ENCODE measurements at regions of chr4 and their contacts with region 1.

Region 1: DNA sequence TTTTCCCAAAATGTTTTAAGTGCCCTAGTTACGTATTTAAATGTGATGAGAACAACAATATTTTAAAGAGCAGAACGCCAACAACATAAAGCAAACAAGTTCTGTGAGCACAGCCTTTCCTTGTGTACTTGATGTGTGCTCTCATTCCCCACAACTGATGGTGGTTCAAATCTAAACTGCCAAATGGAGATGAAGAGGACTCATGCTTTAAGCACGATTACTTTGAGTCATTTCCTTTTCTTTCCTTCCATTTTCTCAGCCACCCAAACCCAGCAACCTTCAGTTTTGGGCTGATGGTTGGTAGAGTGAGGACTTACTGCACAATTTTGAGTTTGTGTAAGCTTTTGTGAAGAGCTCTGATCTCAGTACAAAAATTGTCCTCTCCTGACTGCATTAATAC is 1.7 kb downstream of the NSD2 start:
- DNase-seq: peak in 2 of 3 donors; percentile 49 to 61
- H3K4me3 ChIP-seq: peak overlapping the region in 5 of 7 experiments; percentile 6 to 93 (median 84)
- H3K27ac ChIP-seq: peak overlapping the region in 1 of 2 experiments; percentile 87
- H3K4me1 ChIP-seq: peaks cover 14 to 58% (median 39%) of the 10 kb centered on the region in 4 experiments
- H3K27me3 ChIP-seq: no peaks in the 10 kb centered on the region

Region 2: DNA sequence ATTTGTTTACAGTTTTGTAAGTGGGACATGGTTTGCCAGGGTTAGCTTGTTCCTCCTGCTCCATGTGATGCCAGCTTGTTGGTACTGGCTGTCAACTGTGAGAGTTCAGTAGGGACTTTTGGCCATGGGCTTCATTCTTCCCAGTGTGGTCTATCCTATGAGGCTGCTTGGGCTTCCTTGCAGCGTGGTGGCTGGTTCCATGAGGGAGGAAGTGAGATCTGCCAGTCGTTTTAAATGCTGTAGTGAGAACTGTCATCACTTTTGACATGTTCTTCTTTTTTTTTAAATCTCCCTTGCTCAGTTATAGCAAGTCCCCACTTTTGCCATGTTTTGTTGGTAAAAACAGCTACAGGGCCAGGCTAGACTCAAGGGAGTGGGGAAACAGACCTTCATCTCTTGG is 14.2 kb after region 1 on chr4:
- CTCF ChIA-PET with region 1: interaction called, 13 read pairs
- POLR2A ChIA-PET with region 1: no interaction called
- DNase-seq: no peak
- H3K4me3 ChIP-seq: no peak overlapping the region
- H3K27ac ChIP-seq: no peak overlapping the region
- H3K4me1 ChIP-seq: peaks cover 0 to 16% (median under 1%) of the 10 kb centered on the region in 4 experiments
- H3K27me3 ChIP-seq: no peaks in the 10 kb centered on the region